HepG2 (cell line): ENCODE measurements at regions of chr6 and their contacts with region 1.

Region 1: GRCh38 chr6:145633981-145634627 is 101.2 kb downstream of the EPM2A start:
- DNase-seq: peak; percentile 75
- ATAC-seq: peak; percentile 98
- H3K4me3 ChIP-seq: no peak overlapping the region
- H3K27ac ChIP-seq: no peak overlapping the region
- H3K4me1 ChIP-seq: no peaks in the 10 kb centered on the region
- H3K27me3 ChIP-seq: no peaks in the 10 kb centered on the region
- CTCF ChIP-seq: peak; percentile 94
- EP300 ChIP-seq: no peak
- POLR2A ChIP-seq: no peak
- RAD21 ChIP-seq: peak; percentile 76

Region 2: GRCh38 chr6:144834426-144835038 is 799.6 kb before region 1 on chr6:
- CTCF ChIA-PET with region 1: no interaction called
- POLR2A ChIA-PET with region 1: no interaction called
- in situ Hi-C with region 1: no loop called
- intact Hi-C with region 1: loop called (anchors 5 kb)
- DNase-seq: no peak
- ATAC-seq: no peak
- H3K4me3 ChIP-seq: no peak overlapping the region
- H3K27ac ChIP-seq: no peak overlapping the region
- H3K4me1 ChIP-seq: no peaks in the 10 kb centered on the region
- H3K27me3 ChIP-seq: no peaks in the 10 kb centered on the region
- CTCF ChIP-seq: no peak
- EP300 ChIP-seq: no peak
- POLR2A ChIP-seq: no peak
- RAD21 ChIP-seq: no peak

Region 3: DNA sequence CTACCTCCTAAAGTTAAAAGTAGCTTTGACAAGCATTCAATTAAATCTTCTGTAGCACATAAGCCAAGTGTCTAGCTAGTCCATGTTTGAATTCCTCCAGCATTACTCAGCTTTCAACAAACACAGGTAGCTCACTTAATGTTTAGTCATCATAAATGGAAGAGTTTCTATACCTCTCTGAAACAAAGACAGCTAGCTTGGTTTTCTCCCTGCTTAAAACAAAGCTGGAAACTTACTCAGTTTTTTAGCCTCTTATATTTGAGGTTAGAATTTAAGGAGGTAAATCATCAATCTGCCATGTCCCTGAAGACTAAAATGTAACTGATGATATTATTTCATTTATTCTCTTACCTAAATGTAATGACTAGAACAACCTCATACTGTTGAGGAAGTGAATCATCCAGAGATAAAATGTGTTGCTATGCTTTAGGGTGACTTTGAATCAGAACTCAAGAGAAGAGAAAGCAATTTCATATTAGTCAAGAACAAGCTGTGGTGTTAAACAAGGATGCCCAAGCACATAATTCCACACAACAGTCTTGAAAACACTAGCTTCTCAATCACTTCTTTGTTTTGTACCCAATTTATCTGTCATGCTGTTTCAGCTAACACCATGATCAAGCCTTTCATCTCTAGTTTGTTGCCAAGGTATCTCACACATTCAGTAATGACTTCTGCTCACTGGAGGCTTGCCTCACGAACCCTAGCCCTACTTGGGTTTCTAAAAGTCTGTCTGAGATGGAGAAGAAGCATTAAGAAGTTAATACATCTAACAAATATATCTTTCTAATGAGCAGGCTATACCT is 150.7 kb before region 1 on chr6:
- CTCF ChIA-PET with region 1: no interaction called
- POLR2A ChIA-PET with region 1: no interaction called
- in situ Hi-C with region 1: no loop called
- intact Hi-C with region 1: no loop called
- DNase-seq: peak; percentile 52
- ATAC-seq: peak; percentile 72
- H3K4me3 ChIP-seq: no peak overlapping the region
- H3K27ac ChIP-seq: no peak overlapping the region
- H3K4me1 ChIP-seq: no peaks in the 10 kb centered on the region
- H3K27me3 ChIP-seq: no peaks in the 10 kb centered on the region
- CTCF ChIP-seq: no peak
- EP300 ChIP-seq: no peak
- POLR2A ChIP-seq: no peak
- RAD21 ChIP-seq: no peak

Region 4: GRCh38 chr6:145588981-145589380 is 45.1 kb before region 1 on chr6:
- CTCF ChIA-PET with region 1: no interaction called
- POLR2A ChIA-PET with region 1: no interaction called
- in situ Hi-C with region 1: no loop called
- intact Hi-C with region 1: no loop called
- DNase-seq: no peak
- ATAC-seq: no peak
- H3K4me3 ChIP-seq: no peak overlapping the region
- H3K27ac ChIP-seq: no peak overlapping the region
- H3K4me1 ChIP-seq: no peaks in the 10 kb centered on the region
- H3K27me3 ChIP-seq: no peaks in the 10 kb centered on the region
- CTCF ChIP-seq: no peak
- EP300 ChIP-seq: no peak
- POLR2A ChIP-seq: no peak
- RAD21 ChIP-seq: no peak